ENCODE measurements at regions of chr13 and their contacts with region 1.

Region 1: DNA sequence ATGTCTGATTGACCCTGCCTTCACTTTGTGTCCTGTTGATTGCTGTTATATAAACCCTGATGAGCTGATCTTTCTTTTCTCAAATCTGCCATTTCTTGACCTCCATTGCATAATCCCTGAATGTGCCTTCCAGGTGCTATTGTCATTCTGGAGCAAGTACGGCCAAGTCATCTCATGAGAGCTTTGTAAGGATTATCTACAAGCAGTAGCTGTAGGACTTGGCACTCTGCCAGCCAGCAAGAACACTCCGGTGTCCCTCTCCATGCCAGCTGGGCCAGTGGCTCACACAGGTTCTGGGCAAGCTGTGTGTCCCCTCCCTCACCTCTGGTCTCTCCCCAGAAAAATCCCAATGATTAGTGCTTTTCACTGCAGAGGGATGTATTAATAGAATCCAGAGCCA is 348.1 kb downstream of the FOXO1 start:
- DNase-seq: no peak
- H3K4me3 Mint-ChIP-seq: no peak overlapping the region
- H3K27ac Mint-ChIP-seq: peak overlapping the region; percentile 47
- H3K4me1 Mint-ChIP-seq: peaks cover 58% of the 10 kb centered on the region
- H3K27me3 Mint-ChIP-seq: no peaks in the 10 kb centered on the region

Region 2: DNA sequence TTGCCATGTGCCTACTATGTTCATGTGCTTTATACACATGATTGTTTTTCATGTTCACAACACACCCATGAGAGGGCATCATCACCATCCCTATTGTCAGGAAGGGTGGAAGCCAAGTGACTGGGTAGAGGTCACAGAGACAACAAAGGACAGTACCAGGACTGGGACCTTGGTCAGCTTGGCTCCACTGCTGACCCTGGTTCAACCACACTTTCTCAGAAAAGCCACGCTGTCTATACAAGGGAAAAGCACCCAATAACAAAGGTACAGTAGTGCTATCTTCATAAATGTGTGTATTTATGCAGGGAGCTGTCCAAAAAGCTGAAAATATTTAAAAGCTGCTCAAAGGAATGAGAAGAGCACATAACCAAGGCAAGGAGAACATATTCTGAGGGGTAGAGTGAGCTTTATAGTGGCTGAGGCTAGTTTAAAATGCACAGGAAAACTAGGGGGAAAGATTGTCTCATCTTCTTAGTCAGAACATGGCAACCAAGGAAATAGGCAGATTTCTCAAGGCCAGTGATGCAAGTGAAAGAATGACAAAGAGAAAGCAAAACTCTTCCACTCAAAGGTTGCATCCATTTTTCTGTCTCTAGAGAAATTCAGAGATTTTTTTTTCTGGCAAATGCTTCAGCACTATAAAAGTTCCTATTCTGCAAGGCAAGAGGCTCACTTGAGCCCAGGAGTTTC is 66.9 kb before region 1 on chr13:
- intact Hi-C with region 1: loop called (anchors 1 kb)
- DNase-seq: peak; percentile 68
- H3K4me3 Mint-ChIP-seq: peak overlapping the region; percentile 48
- H3K27ac Mint-ChIP-seq: peak overlapping the region; percentile 83
- H3K4me1 Mint-ChIP-seq: peaks cover 24% of the 10 kb centered on the region
- H3K27me3 Mint-ChIP-seq: no peaks in the 10 kb centered on the region

Region 3: DNA sequence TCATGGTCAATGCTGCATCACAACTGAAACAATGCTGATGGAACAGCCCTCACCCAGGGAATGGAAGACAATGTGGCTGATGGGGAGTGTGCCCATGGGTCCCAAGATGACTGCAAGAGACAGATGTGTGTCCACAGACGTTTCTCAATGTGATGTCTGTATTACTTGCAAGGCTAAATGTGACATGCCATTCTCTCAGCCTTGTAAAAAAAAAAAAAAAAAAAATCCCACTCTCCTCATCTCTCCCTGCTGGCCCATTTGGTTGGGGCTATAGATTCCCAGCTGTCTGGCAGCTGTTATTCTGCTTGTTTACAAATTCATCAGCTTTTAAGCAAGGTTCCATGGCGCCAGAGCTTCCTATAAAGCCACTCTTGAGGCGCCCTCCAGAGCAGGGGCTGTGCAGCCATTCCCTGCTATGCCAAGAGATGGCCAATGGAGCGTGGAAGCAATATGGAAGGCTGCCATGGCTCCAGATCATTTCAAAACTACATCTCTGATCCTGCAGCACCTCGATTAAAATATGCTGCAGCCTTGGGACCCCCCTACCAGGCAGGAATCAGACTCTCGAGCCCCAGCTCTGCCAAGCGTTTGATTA is 53.3 kb after region 1 on chr13:
- intact Hi-C with region 1: loop called (anchors 5 kb)
- DNase-seq: no peak
- H3K4me3 Mint-ChIP-seq: peak overlapping the region; percentile 62
- H3K27ac Mint-ChIP-seq: peak overlapping the region; percentile 54
- H3K4me1 Mint-ChIP-seq: peaks cover 39% of the 10 kb centered on the region
- H3K27me3 Mint-ChIP-seq: no peaks in the 10 kb centered on the region

Region 4: DNA sequence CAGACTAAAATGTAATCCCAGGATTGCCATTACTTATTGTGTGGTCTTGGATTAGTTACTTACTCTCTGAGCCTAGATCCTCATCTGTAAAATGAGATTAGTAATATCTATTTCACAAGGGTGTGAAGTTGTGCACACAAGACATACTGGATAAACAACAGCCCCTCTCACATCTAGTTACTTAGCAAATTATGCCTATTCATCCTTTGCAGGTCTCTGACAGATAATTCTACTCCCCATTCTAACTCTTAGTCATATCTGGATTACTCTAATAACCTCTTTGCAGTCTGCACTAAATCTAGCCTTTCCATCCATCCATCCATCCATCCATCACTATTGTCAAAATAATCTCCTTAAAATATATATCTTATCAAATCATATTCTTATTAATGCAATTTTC is 932.6 kb after region 1 on chr13:
- intact Hi-C with region 1: no loop called
- DNase-seq: no peak
- H3K4me3 Mint-ChIP-seq: no peak overlapping the region
- H3K27ac Mint-ChIP-seq: no peak overlapping the region
- H3K4me1 Mint-ChIP-seq: peaks cover 3% of the 10 kb centered on the region
- H3K27me3 Mint-ChIP-seq: no peaks in the 10 kb centered on the region